ENCODE measurements at regions of chr11 and their contacts with region 1.

Region 1: GRCh38 chr11:3947061-3947460 is 91.6 kb downstream of the STIM1 start:
- DNase-seq: peak; percentile 52
- ATAC-seq: peak; percentile 69
- H3K4me3 ChIP-seq: peak overlapping the region in 3 of 5 experiments; percentile 21 to 35 (median 28)
- H3K4me3 Mint-ChIP-seq: peak overlapping the region; percentile 55
- H3K27ac ChIP-seq: peak overlapping the region; percentile 59 to 84
- H3K27ac Mint-ChIP-seq: peak overlapping the region; percentile 87
- H3K4me1 ChIP-seq: peaks cover 80 to 83% of the 10 kb centered on the region in 2 donors
- H3K4me1 Mint-ChIP-seq: peaks cover 92% of the 10 kb centered on the region
- H3K27me3 ChIP-seq: no peaks in the 10 kb centered on the region
- H3K27me3 Mint-ChIP-seq: no peaks in the 10 kb centered on the region
- CTCF ChIP-seq: no peak

Region 2: DNA sequence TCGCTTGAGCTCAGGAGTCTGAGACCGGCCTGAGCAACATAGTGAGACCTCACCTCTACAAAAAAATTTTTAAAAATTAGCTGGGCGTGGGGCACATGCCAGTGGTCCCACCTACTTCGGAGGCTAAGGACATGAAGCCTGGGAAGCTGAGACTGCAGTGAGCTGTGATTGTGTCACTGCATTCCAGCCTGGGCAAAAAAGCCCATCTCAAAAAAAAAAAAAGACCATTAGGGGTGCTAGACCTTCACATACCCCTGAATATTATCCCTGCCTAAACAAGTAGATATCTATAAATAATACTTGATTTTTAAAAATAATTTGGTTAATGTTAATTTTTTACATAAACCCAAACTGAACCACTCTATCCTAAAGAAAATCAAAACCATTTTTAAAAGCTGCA is 173.9 kb before region 1 on chr11:
- CTCF ChIA-PET with region 1: no interaction called
- POLR2A ChIA-PET with region 1: no interaction called
- intact Hi-C with region 1: no loop called
- DNase-seq: no peak
- ATAC-seq: no peak
- H3K4me3 ChIP-seq: no peak overlapping the region
- H3K4me3 Mint-ChIP-seq: no peak overlapping the region
- H3K27ac ChIP-seq: no peak overlapping the region
- H3K27ac Mint-ChIP-seq: no peak overlapping the region
- H3K4me1 ChIP-seq: no peaks in the 10 kb centered on the region
- H3K4me1 Mint-ChIP-seq: no peaks in the 10 kb centered on the region
- H3K27me3 ChIP-seq: no peaks in the 10 kb centered on the region
- H3K27me3 Mint-ChIP-seq: no peaks in the 10 kb centered on the region
- CTCF ChIP-seq: no peak

Region 3: GRCh38 chr11:3929649-3930048 is 17.4 kb before region 1 on chr11:
- CTCF ChIA-PET with region 1: interaction called, 5 read pairs
- POLR2A ChIA-PET with region 1: interaction called, 3 read pairs
- intact Hi-C with region 1: loop called (anchors 2 kb)
- DNase-seq: no peak
- ATAC-seq: no peak
- H3K4me3 ChIP-seq: no peak overlapping the region
- H3K4me3 Mint-ChIP-seq: no peak overlapping the region
- H3K27ac ChIP-seq: peak overlapping the region in 1 of 2 donors; percentile 5
- H3K27ac Mint-ChIP-seq: no peak overlapping the region
- H3K4me1 ChIP-seq: peaks cover 31 to 33% of the 10 kb centered on the region in 2 donors
- H3K4me1 Mint-ChIP-seq: peaks cover 62% of the 10 kb centered on the region
- H3K27me3 ChIP-seq: no peaks in the 10 kb centered on the region
- H3K27me3 Mint-ChIP-seq: no peaks in the 10 kb centered on the region
- CTCF ChIP-seq: no peak

Region 4: DNA sequence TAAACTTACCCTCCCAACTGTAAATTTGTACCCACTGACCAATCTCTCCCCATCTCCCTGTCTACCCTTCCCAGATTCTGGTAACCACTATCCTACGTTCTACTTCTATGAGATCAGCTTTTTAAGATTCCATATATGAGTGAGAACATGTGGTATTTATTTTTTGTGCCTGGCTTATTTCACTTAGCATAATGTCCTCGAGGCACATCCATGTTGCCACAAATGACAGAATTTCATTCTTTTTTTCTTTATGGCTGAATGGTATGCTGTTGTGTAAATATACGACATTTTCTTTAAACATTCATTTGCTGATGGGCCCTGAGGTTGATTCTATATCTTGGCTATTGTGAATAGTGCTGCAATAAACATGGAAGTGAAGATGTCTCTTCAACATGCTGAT is 72.8 kb after region 1 on chr11:
- CTCF ChIA-PET with region 1: no interaction called
- POLR2A ChIA-PET with region 1: no interaction called
- intact Hi-C with region 1: loop called (anchors 10 kb)
- DNase-seq: no peak
- ATAC-seq: no peak
- H3K4me3 ChIP-seq: no peak overlapping the region
- H3K4me3 Mint-ChIP-seq: no peak overlapping the region
- H3K27ac ChIP-seq: peak overlapping the region in 1 of 2 donors; percentile 1
- H3K27ac Mint-ChIP-seq: no peak overlapping the region
- H3K4me1 ChIP-seq: no peaks in the 10 kb centered on the region
- H3K4me1 Mint-ChIP-seq: peaks cover 29% of the 10 kb centered on the region
- H3K27me3 ChIP-seq: no peaks in the 10 kb centered on the region
- H3K27me3 Mint-ChIP-seq: no peaks in the 10 kb centered on the region
- CTCF ChIP-seq: no peak

Region 5: DNA sequence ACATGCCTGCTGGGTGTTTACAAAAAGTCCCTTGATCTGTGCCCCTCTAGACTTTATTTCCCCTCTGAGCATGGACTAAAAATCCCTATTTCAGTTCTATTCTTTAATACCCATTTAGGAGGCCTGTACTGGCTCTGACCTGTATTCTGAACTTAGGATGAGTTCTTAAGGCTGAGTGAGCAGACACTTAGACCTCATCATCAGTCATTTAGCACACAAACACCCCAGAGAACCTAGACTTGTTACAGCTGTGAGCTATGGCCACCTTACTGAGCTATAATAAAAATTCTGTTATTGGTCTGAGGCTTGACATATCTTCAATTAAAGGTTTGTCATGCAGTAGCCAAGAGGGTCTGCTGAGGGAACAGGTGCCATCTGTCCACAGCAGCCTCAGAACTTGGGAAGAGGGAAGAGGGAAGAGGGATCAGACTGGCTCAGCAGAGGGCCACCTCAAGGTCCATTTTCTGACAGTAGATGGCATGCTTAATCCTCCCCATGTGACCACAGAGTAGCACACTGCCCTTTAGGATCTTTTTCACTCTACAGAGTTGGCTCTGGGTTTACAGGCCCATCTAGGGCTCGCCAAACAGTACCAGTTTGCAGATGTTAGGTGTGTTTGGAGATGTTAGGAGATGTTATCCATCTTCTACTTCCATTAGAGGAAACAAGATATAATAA is 117.4 kb after region 1 on chr11:
- CTCF ChIA-PET with region 1: no interaction called
- POLR2A ChIA-PET with region 1: no interaction called
- intact Hi-C with region 1: loop called (anchors 5 kb)
- DNase-seq: no peak
- ATAC-seq: no peak
- H3K4me3 ChIP-seq: no peak overlapping the region
- H3K4me3 Mint-ChIP-seq: no peak overlapping the region
- H3K27ac ChIP-seq: peak overlapping the region in 1 of 2 donors; percentile 11
- H3K27ac Mint-ChIP-seq: no peak overlapping the region
- H3K4me1 ChIP-seq: peaks cover 18 to 26% of the 10 kb centered on the region in 2 donors
- H3K4me1 Mint-ChIP-seq: peaks cover 43% of the 10 kb centered on the region
- H3K27me3 ChIP-seq: no peaks in the 10 kb centered on the region
- H3K27me3 Mint-ChIP-seq: no peaks in the 10 kb centered on the region
- CTCF ChIP-seq: no peak

Region 6: GRCh38 chr11:4187055-4187988 is 240.3 kb after region 1 on chr11:
- CTCF ChIA-PET with region 1: no interaction called
- POLR2A ChIA-PET with region 1: no interaction called
- intact Hi-C with region 1: no loop called
- DNase-seq: peak; percentile 83
- ATAC-seq: peak; percentile 95
- H3K4me3 ChIP-seq: peak overlapping the region in 4 of 5 experiments; percentile 22 to 56 (median 46)
- H3K4me3 Mint-ChIP-seq: peak overlapping the region; percentile 80
- H3K27ac ChIP-seq: no peak overlapping the region
- H3K27ac Mint-ChIP-seq: no peak overlapping the region
- H3K4me1 ChIP-seq: peaks cover 4 to 6% of the 10 kb centered on the region in 2 donors
- H3K4me1 Mint-ChIP-seq: peaks cover 8% of the 10 kb centered on the region
- H3K27me3 ChIP-seq: peaks cover 0 to 32% (median 1%) of the 10 kb centered on the region in 4 experiments
- H3K27me3 Mint-ChIP-seq: peaks cover 20% of the 10 kb centered on the region
- CTCF ChIP-seq: peak; percentile 97

Region 7: DNA sequence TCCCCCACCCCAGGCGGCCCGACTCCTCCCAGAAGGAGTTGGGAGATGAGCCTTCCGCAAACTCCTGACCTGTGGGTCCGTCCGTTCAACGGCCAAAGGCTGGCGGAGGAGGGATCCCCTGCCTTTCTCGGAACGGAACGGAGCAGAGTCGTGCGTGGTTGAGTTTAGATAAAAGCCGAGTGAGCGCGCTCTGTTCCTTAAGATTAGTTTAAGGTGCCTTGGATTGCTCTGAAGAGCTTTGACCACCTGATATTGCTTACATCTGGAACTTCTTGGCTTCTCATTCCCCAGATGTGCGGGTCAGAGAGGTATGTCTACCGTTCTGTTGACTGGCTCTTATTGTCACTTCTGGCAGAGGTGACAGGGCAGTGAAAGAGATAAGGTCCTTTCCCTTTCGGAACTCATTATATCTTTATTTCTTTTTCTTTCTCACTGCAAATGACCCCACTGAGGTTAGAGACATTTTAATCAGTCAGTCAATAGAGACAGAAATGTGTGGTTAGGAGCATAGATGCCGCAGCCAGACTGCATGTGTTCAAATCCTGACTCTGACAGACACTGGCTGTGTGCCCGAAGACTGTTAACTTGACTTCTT is 1649.6 kb after region 1 on chr11 and contains the start of gene TRIM6:
- CTCF ChIA-PET with region 1: no interaction called
- POLR2A ChIA-PET with region 1: no interaction called
- intact Hi-C with region 1: no loop called
- DNase-seq: peak; percentile 23
- ATAC-seq: peak; percentile 42
- H3K4me3 ChIP-seq: peak within 1 kb of the TSS; percentile 35 to 52 (median 46)
- H3K4me3 Mint-ChIP-seq: peak within 1 kb of the TSS; percentile 92
- H3K27ac ChIP-seq: no peak within 1 kb of the TSS
- H3K27ac Mint-ChIP-seq: peak within 1 kb of the TSS; percentile 65
- H3K4me1 ChIP-seq: peaks cover 9 to 11% of the 10 kb centered on the region in 2 donors
- H3K4me1 Mint-ChIP-seq: peaks cover 16% of the 10 kb centered on the region
- H3K27me3 ChIP-seq: peaks cover 0 to 3% (median 1%) of the 10 kb centered on the region in 4 experiments
- H3K27me3 Mint-ChIP-seq: peaks cover 3% of the 10 kb centered on the region
- CTCF ChIP-seq: no peak
- total RNA-seq, gene TRIM6: 0.10 TPM in 1 of 2 replicates, not detected in the other